ENCODE measurements at regions of chr10 and their contacts with region 1.

Region 1: GRCh38 chr10:103040418-103040817 is 122.3 kb downstream of the CNNM2 start:
- DNase-seq: no peak
- CTCF ChIP-seq: no peak

Region 2: GRCh38 chr10:102678842-102679289 is 361.6 kb before region 1 on chr10:
- in situ Hi-C with region 1: no loop called
- DNase-seq: peak; percentile 75
- CTCF ChIP-seq: peak; percentile 83

Region 3: GRCh38 chr10:102927311-102928010 is 113.0 kb before region 1 on chr10:
- in situ Hi-C with region 1: loop called (anchors 10 kb)
- DNase-seq: no peak
- CTCF ChIP-seq: no peak